ENCODE measurements at regions of chr10 and their contacts with region 1.

Region 1: DNA sequence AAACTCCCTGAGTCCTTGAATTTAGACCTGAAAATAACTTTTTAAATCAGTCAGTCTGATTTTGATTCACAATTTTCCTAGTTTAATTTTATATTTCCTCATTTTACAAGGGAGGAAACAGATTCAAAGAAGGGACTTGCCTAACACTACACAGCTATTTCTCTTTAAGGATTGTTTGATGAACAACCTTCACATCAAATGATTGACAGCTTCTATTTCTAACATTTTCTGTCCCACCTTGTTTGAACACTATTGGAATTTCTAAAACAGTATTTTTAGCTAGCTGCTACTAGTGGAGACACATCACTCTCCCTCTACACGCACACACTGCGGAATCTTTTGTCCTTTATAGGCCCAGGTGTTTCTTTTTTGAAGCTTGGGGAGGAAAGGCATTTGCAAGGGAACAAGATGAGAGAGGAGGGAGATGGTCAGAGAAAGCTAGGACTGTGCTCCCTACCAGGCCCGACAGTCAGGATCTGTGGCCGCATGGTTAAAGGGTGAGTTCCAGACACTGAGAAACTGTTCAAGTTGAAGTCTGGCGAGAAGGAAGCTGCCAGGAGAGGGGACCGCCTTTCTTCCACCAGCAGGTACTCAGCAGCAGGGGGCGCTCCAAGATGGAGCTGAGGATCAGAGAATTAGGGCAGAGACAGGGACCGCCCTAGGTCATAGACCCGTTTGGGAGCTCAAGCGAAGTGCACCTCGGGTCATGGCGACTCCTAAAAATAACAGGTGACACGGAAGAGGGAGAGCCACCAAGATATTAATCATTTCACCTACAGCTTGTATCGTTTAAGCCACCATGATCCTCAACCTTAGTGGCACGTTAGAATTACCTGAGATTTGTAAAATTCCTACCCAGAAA is 49.7 kb downstream of the DNAJC12 start:
- DNase-seq: peak; percentile 84
- ATAC-seq: peak; percentile 46
- H3K4me3 Mint-ChIP-seq: peak overlapping the region; percentile 23
- H3K27ac Mint-ChIP-seq: peak overlapping the region; percentile 3
- H3K4me1 Mint-ChIP-seq: peaks cover 60% of the 10 kb centered on the region
- H3K27me3 Mint-ChIP-seq: no peaks in the 10 kb centered on the region

Region 2: GRCh38 chr10:67520924-67521520 is 267.2 kb before region 1 on chr10:
- CTCF ChIA-PET with region 1: no interaction called
- POLR2A ChIA-PET with region 1: no interaction called
- DNase-seq: peak; percentile 54
- ATAC-seq: peak; percentile 68
- H3K4me3 Mint-ChIP-seq: no peak overlapping the region
- H3K27ac Mint-ChIP-seq: no peak overlapping the region
- H3K4me1 Mint-ChIP-seq: no peaks in the 10 kb centered on the region
- H3K27me3 Mint-ChIP-seq: peaks cover 2% of the 10 kb centered on the region

Region 3: DNA sequence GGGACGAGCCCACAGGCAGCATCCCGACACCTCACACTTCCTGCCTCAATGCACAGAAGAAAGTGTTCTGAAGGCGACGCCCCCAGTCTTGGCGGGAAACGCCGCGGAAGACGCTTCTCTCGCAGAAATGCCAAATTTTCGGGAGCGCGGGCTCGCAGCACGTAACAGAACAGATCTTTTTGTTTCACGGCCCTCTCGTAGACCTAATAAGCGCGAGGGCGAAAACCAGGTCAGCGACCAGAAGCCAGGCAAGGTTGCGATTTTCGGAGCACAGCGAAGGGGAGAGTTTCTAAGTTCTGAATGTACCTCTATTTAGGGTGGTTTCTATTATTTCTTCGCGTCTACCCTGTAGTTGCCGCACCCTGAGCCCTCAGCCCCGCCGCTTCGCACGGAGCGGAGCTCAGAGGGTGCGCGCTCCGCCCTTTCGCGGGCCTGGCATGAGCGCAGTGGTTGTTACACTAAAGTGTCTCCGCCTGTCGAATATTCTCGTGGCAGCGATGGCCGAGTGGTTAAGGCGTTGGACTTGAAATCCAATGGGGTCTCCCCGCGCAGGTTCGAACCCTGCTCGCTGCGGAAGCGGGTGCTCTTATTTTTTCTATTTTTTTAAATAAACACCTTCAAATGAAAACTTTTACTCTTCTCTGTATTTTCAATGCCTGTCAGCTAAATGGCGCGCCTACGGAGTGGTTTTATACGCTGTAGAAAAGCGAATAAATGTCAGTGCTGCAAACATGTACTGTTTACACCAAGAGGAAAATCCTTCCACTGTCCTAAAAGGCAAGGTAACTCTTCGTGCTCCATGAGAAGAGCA is 24.0 kb before region 1 on chr10:
- CTCF ChIA-PET with region 1: interaction called, 13 read pairs
- POLR2A ChIA-PET with region 1: interaction called, 13 read pairs
- DNase-seq: peak; percentile 97
- ATAC-seq: peak; percentile 85
- H3K4me3 Mint-ChIP-seq: peak overlapping the region; percentile 86
- H3K27ac Mint-ChIP-seq: peak overlapping the region; percentile 98
- H3K4me1 Mint-ChIP-seq: peaks cover 31% of the 10 kb centered on the region
- H3K27me3 Mint-ChIP-seq: peaks cover 2% of the 10 kb centered on the region

Region 4: DNA sequence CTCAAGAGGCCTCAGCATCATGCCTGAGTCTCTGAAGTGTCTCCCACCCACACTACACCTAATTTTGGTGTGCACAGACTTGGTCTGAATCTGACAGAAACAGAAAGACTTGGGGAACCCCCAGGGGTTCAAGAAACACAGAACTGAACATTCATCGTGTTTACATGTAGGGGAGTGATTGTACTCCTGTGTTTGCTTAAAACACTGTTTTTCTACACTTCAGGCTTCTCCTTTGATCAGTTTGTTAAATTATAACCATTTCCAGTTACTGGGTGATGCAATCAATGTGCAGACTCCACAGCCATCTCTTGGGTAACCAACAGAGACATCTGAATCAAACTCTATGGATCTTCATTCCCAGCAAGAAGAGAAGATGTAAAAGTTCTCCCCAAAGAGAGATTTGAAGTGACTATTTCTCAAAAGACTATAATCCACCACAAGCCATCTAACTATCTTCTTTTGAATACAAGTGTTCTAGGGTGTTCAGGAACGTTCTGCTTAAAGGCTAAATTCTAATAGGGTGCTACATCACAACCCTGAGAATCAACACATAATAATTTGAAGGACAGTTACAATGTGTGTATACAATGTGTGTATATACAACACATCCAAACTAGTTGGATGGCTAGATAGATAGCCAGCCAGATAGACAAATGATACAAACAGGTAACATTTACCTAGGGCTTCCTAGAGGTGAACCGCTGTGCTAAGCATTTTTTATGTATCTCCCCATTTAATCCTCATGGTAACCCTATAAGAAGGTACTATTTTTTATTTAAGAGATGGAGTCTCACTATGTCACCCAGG is 15.5 kb after region 1 on chr10:
- CTCF ChIA-PET with region 1: interaction called, 46 read pairs
- POLR2A ChIA-PET with region 1: no interaction called
- DNase-seq: no peak
- ATAC-seq: no peak
- H3K4me3 Mint-ChIP-seq: no peak overlapping the region
- H3K27ac Mint-ChIP-seq: no peak overlapping the region
- H3K4me1 Mint-ChIP-seq: peaks cover 5% of the 10 kb centered on the region
- H3K27me3 Mint-ChIP-seq: no peaks in the 10 kb centered on the region

Region 5: GRCh38 chr10:67837541-67838314 is 49.5 kb after region 1 on chr10 and contains the start of gene DNAJC12:
- CTCF ChIA-PET with region 1: interaction called, 31 read pairs
- POLR2A ChIA-PET with region 1: interaction called, 3 read pairs
- DNase-seq: no peak
- ATAC-seq: peak; percentile 91
- H3K4me3 Mint-ChIP-seq: peak within 1 kb of the TSS; percentile 58
- H3K27ac Mint-ChIP-seq: peak within 1 kb of the TSS; percentile 10
- H3K4me1 Mint-ChIP-seq: peaks cover 13% of the 10 kb centered on the region
- H3K27me3 Mint-ChIP-seq: no peaks in the 10 kb centered on the region
- total RNA-seq, gene DNAJC12: 2.6 to 3.0 TPM

Region 6: DNA sequence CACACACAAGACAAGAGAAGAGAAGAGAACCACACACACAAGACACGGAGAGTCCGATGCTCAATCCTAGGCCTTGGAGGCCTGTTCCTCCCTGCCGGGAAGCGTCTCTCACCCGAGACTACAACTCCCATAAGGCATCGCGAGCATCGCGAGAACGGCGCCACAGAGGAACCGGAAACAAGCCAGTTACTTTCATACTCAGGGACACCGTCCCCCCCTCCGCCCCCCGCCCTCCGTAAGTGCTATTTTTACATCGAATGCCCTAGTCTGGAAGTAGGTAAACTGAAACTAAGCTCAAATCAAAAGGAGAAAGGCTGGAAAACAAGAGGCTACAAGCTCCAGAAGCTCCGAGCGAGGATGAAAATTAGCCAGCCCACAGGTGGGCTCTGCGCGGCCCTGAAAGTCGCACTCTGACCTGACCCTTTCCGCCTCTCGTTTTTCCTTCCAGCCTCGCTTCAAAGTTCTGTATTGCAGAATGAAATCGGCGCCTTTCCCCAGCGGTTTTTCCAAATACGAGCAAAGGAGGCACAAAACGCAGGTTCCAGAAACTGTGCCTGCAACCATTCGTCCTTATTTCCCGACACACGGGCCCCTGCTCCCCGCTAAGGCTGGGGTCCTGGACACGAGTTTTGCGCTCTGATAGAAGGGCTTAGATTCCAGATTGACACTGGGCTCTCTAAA is 61.2 kb after region 1 on chr10:
- CTCF ChIA-PET with region 1: interaction called, 110 read pairs
- POLR2A ChIA-PET with region 1: interaction called, 7 read pairs
- DNase-seq: peak; percentile 96
- ATAC-seq: peak; percentile 100
- H3K4me3 Mint-ChIP-seq: peak overlapping the region; percentile 92
- H3K27ac Mint-ChIP-seq: peak overlapping the region; percentile 98
- H3K4me1 Mint-ChIP-seq: peaks cover 13% of the 10 kb centered on the region
- H3K27me3 Mint-ChIP-seq: no peaks in the 10 kb centered on the region

Region 7: GRCh38 chr10:68156373-68157185 is 368.3 kb after region 1 on chr10:
- CTCF ChIA-PET with region 1: interaction called, 82 read pairs
- POLR2A ChIA-PET with region 1: no interaction called
- DNase-seq: peak; percentile 75
- ATAC-seq: peak; percentile 81
- H3K4me3 Mint-ChIP-seq: no peak overlapping the region
- H3K27ac Mint-ChIP-seq: no peak overlapping the region
- H3K4me1 Mint-ChIP-seq: no peaks in the 10 kb centered on the region
- H3K27me3 Mint-ChIP-seq: peaks cover 2% of the 10 kb centered on the region